ENCODE measurements at regions of chr11 and their contacts with region 1.

Region 1: DNA sequence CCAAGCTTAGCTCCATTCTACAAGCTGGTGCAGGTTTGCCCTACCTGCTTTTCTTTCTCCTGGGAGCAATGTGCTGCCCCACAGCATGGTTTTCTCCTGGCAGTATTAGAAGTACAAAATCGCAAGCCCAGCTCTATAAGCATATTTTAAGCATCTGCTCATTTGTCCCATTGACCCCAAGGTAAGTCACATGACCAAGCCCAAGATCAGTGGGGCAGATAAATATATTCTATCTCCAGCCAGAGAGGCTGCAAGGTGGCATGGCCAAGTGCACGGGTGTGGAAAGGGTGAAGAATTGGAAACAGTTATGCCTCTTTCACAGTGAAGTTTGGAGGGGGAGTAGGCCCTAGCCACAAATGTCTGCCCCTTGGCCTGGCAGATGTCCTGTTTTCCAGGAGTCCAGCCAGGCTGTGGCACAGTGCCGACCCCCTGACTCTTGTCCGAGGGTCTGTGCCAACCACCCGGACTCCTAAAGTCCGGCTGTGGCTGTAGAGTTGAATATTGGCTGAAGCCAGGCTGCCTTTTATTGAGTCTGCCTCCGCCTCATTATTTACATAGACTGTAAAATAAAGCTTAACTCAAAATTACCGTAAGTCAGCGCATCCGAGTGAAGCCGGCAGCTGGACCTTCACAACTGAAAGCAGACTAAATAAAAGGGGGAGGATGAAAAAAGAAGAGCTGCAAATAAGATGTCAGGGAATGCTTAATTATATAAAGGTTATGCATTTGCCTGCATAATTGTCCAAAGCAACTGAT is 165.7 kb downstream of the COMMD9 start:
- DNase-seq: peak in 4 of 5 donors; percentile 20 to 70 (median 64)
- H3K4me3 ChIP-seq: no peak overlapping the region
- H3K27ac ChIP-seq: peak overlapping the region in 1 of 2 donors; percentile 5
- H3K4me1 ChIP-seq: peaks cover 9% of the 10 kb centered on the region
- H3K27me3 ChIP-seq: no peaks in the 10 kb centered on the region
- CTCF ChIP-seq: no peak
- EP300 ChIP-seq: no peak
- POLR2A ChIP-seq: no peak

Region 2: DNA sequence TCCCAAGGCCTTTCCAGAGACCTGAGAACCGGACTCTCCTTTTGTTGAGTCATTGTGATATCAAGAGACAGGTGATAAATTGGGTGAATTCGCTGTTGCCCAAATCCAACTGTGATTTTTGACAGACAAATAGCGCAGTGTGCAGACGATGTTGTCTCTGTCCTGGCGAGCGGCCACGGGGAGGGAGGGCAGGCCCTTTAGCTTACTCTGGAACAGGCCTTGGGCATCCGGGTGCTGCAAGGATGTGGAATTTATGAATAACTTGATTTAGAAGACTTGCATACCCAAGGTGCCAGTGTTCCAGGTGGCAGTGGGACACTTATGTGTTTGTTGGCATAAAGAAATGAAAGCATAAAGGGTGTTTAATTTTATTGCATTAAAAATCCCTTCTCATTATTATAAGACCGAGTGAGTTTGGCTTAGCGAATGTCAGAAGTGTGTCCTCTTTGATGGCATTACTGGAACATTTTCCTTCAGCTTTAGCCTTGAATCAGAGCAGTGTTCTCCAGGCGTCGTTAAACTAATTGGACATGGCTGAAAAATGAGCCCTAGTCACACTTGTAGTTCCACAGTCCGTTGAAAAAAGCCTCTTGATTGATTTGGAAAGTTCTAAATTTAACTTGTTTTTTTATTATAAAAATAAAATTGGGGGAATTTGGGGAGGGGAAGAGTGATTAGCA is 170.3 kb before region 1 on chr11:
- intact Hi-C with region 1: loop called in 1 of 4 experiments (anchors 10 kb)
- DNase-seq: peak in 2 of 5 donors; percentile 34 to 42
- H3K4me3 ChIP-seq: no peak overlapping the region
- H3K27ac ChIP-seq: no peak overlapping the region
- H3K4me1 ChIP-seq: peaks cover 4% of the 10 kb centered on the region
- H3K27me3 ChIP-seq: no peaks in the 10 kb centered on the region
- CTCF ChIP-seq: no peak
- EP300 ChIP-seq: no peak
- POLR2A ChIP-seq: no peak